CD8-positive, alpha-beta T cell (primary cell): ENCODE measurements at regions of chr21 and their contacts with region 1.

Region 1: GRCh38 chr21:34073032-34073869 is at the starts of genes MRPS6 and SLC5A3:
- DNase-seq: peak; percentile 37 to 85 (median 72)
- ATAC-seq: peak; percentile 79
- H3K4me3 ChIP-seq: peak within 1 kb of the TSS; percentile 76 to 84
- H3K4me3 Mint-ChIP-seq: peak within 1 kb of the TSS; percentile 94
- H3K27ac ChIP-seq: peak within 1 kb of the TSS; percentile 67 to 72
- H3K27ac Mint-ChIP-seq: peak within 1 kb of the TSS; percentile 94
- H3K4me1 ChIP-seq: peaks cover 39% of the 10 kb centered on the region
- H3K4me1 Mint-ChIP-seq: peaks cover 47% of the 10 kb centered on the region
- H3K27me3 ChIP-seq: no peaks in the 10 kb centered on the region
- H3K27me3 Mint-ChIP-seq: no peaks in the 10 kb centered on the region
- CTCF ChIP-seq: no peak
- total RNA-seq, gene MRPS6: 14.3 to 15.4 TPM
- total RNA-seq, gene SLC5A3: 4.6 to 5.2 TPM

Region 2: GRCh38 chr21:33396947-33397346 is 676.3 kb before region 1 on chr21:
- CTCF ChIA-PET with region 1: no interaction called
- POLR2A ChIA-PET with region 1: no interaction called
- intact Hi-C with region 1: no loop called
- DNase-seq: no peak
- ATAC-seq: no peak
- H3K4me3 ChIP-seq: no peak overlapping the region
- H3K4me3 Mint-ChIP-seq: no peak overlapping the region
- H3K27ac ChIP-seq: no peak overlapping the region
- H3K27ac Mint-ChIP-seq: no peak overlapping the region
- H3K4me1 ChIP-seq: no peaks in the 10 kb centered on the region
- H3K4me1 Mint-ChIP-seq: peaks cover 10% of the 10 kb centered on the region
- H3K27me3 ChIP-seq: peaks cover 0 to 20% of the 10 kb centered on the region in 2 experiments
- H3K27me3 Mint-ChIP-seq: peaks cover 3% of the 10 kb centered on the region
- CTCF ChIP-seq: no peak

Region 3: GRCh38 chr21:33491373-33492102 is 581.7 kb before region 1 on chr21 and contains the start of gene DNAJC28:
- CTCF ChIA-PET with region 1: no interaction called
- POLR2A ChIA-PET with region 1: no interaction called
- intact Hi-C with region 1: loop called in 1 of 2 experiments (anchors 5 kb)
- DNase-seq: peak; percentile 87 to 98 (median 95)
- ATAC-seq: peak; percentile 97
- H3K4me3 ChIP-seq: peak within 1 kb of the TSS; percentile 81 to 95
- H3K4me3 Mint-ChIP-seq: peak within 1 kb of the TSS; percentile 92
- H3K27ac ChIP-seq: peak within 1 kb of the TSS; percentile 60 to 73
- H3K27ac Mint-ChIP-seq: peak within 1 kb of the TSS; percentile 94
- H3K4me1 ChIP-seq: peaks cover 9% of the 10 kb centered on the region
- H3K4me1 Mint-ChIP-seq: peaks cover 11% of the 10 kb centered on the region
- H3K27me3 ChIP-seq: no peaks in the 10 kb centered on the region
- H3K27me3 Mint-ChIP-seq: no peaks in the 10 kb centered on the region
- CTCF ChIP-seq: no peak
- total RNA-seq, gene DNAJC28: 0.22 to 0.33 TPM

Region 4: GRCh38 chr21:33947451-33948095 is 125.7 kb before region 1 on chr21:
- CTCF ChIA-PET with region 1: interaction called, 7 read pairs
- POLR2A ChIA-PET with region 1: interaction called, 39 read pairs
- intact Hi-C with region 1: loop called (anchors 1 kb)
- DNase-seq: peak; percentile 64 to 97 (median 82)
- ATAC-seq: peak; percentile 56
- H3K4me3 ChIP-seq: peak overlapping the region; percentile 18 to 25
- H3K4me3 Mint-ChIP-seq: peak overlapping the region; percentile 75
- H3K27ac ChIP-seq: peak overlapping the region; percentile 94 to 95
- H3K27ac Mint-ChIP-seq: peak overlapping the region; percentile 99
- H3K4me1 ChIP-seq: peaks cover 66% of the 10 kb centered on the region
- H3K4me1 Mint-ChIP-seq: peaks cover 78% of the 10 kb centered on the region
- H3K27me3 ChIP-seq: no peaks in the 10 kb centered on the region
- H3K27me3 Mint-ChIP-seq: no peaks in the 10 kb centered on the region
- CTCF ChIP-seq: no peak

Region 5: GRCh38 chr21:34091607-34092006 is 18.4 kb after region 1 on chr21:
- CTCF ChIA-PET with region 1: interaction called, 9 read pairs
- POLR2A ChIA-PET with region 1: interaction called, 8 read pairs
- intact Hi-C with region 1: loop called (anchors 2 kb)
- DNase-seq: peak in 2 of 9 experiments; percentile 17 to 26
- ATAC-seq: no peak
- H3K4me3 ChIP-seq: no peak overlapping the region
- H3K4me3 Mint-ChIP-seq: no peak overlapping the region
- H3K27ac ChIP-seq: no peak overlapping the region
- H3K27ac Mint-ChIP-seq: peak overlapping the region; percentile 4
- H3K4me1 ChIP-seq: peaks cover 61% of the 10 kb centered on the region
- H3K4me1 Mint-ChIP-seq: peaks cover 63% of the 10 kb centered on the region
- H3K27me3 ChIP-seq: no peaks in the 10 kb centered on the region
- H3K27me3 Mint-ChIP-seq: no peaks in the 10 kb centered on the region
- CTCF ChIP-seq: peak; percentile 47

Region 6: DNA sequence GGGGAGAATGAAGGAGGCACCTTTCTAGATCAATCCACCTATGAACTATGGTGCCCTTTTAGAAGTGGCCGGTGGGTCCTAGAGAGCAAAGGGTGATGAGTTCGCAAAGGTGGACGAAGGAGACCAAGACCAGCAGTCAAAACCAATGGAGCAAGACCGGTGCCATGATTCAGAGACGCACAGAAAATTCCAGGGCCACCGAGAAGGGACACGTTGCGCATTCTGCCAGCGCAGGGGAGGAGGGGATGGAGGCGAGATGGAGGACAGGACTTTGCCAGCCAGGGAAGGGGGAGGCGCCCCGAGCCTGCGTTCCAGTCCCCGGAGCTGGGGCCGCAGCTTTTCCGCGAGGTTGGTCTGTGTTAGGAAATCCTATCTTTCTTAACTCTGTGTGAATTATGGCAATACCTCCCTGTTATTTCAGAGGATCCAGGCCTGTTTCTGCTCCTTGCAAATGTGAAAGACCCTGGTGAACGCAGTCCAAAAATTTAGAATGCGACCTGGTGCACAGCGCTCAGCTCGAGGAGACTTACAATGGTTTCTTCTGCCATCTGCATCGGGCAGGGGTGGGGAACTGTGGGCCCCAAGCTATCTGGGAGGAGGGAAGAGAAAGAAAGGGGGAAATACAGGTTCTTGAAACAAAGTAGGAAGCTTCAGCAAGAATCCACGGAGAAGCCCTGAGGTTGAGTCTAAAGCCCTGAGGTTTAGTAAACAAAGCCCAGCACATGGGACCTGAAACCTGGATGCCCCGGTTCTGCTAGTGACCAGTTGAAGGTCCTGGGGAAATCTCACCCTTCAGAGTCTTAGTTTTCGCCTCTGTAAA is 129.5 kb after region 1 on chr21:
- CTCF ChIA-PET with region 1: interaction called, 5 read pairs
- POLR2A ChIA-PET with region 1: interaction called, 6 read pairs
- intact Hi-C with region 1: loop called (anchors 5 kb)
- DNase-seq: no peak
- ATAC-seq: no peak
- H3K4me3 ChIP-seq: peak overlapping the region; percentile 46 to 56
- H3K4me3 Mint-ChIP-seq: peak overlapping the region; percentile 81
- H3K27ac ChIP-seq: no peak overlapping the region
- H3K27ac Mint-ChIP-seq: no peak overlapping the region
- H3K4me1 ChIP-seq: peaks cover 30% of the 10 kb centered on the region
- H3K4me1 Mint-ChIP-seq: peaks cover 41% of the 10 kb centered on the region
- H3K27me3 ChIP-seq: no peaks in the 10 kb centered on the region
- H3K27me3 Mint-ChIP-seq: no peaks in the 10 kb centered on the region
- CTCF ChIP-seq: no peak

Region 7: GRCh38 chr21:34614633-34615486 is 541.6 kb after region 1 on chr21 and contains the start of gene RCAN1:
- CTCF ChIA-PET with region 1: no interaction called
- POLR2A ChIA-PET with region 1: no interaction called
- intact Hi-C with region 1: loop called in 1 of 2 experiments (anchors 10 kb)
- DNase-seq: peak; percentile 64 to 94 (median 85)
- ATAC-seq: peak; percentile 95
- H3K4me3 ChIP-seq: peak within 1 kb of the TSS; percentile 51 to 63
- H3K4me3 Mint-ChIP-seq: peak within 1 kb of the TSS; percentile 90
- H3K27ac ChIP-seq: peak within 1 kb of the TSS; percentile 41 to 68
- H3K27ac Mint-ChIP-seq: peak within 1 kb of the TSS; percentile 91
- H3K4me1 ChIP-seq: peaks cover 13% of the 10 kb centered on the region
- H3K4me1 Mint-ChIP-seq: peaks cover 21% of the 10 kb centered on the region
- H3K27me3 ChIP-seq: no peaks in the 10 kb centered on the region
- H3K27me3 Mint-ChIP-seq: no peaks in the 10 kb centered on the region
- CTCF ChIP-seq: no peak
- total RNA-seq, gene RCAN1: 0.73 to 1.0 TPM